CD8-positive, alpha-beta T cell (primary cell): ENCODE measurements at regions of chr14 and their contacts with region 1.

Region 1: GRCh38 chr14:101774006-101774795 is 12.7 kb downstream of the PPP2R5C start:
- DNase-seq: no peak
- ATAC-seq: no peak
- H3K4me3 ChIP-seq: no peak overlapping the region
- H3K4me3 Mint-ChIP-seq: no peak overlapping the region
- H3K27ac ChIP-seq: no peak overlapping the region
- H3K27ac Mint-ChIP-seq: peak overlapping the region; percentile 58
- H3K4me1 ChIP-seq: no peaks in the 10 kb centered on the region
- H3K4me1 Mint-ChIP-seq: peaks cover 37% of the 10 kb centered on the region
- H3K27me3 ChIP-seq: no peaks in the 10 kb centered on the region
- H3K27me3 Mint-ChIP-seq: no peaks in the 10 kb centered on the region
- CTCF ChIP-seq: no peak

Region 2: GRCh38 chr14:101797856-101798255 is 23.7 kb after region 1 on chr14:
- CTCF ChIA-PET with region 1: interaction called, 11 read pairs
- POLR2A ChIA-PET with region 1: interaction called, 3 read pairs
- intact Hi-C with region 1: no loop called
- DNase-seq: no peak
- ATAC-seq: no peak
- H3K4me3 ChIP-seq: no peak overlapping the region
- H3K4me3 Mint-ChIP-seq: no peak overlapping the region
- H3K27ac ChIP-seq: no peak overlapping the region
- H3K27ac Mint-ChIP-seq: no peak overlapping the region
- H3K4me1 ChIP-seq: peaks cover 1% of the 10 kb centered on the region
- H3K4me1 Mint-ChIP-seq: peaks cover 6% of the 10 kb centered on the region
- H3K27me3 ChIP-seq: no peaks in the 10 kb centered on the region
- H3K27me3 Mint-ChIP-seq: no peaks in the 10 kb centered on the region
- CTCF ChIP-seq: no peak

Region 3: DNA sequence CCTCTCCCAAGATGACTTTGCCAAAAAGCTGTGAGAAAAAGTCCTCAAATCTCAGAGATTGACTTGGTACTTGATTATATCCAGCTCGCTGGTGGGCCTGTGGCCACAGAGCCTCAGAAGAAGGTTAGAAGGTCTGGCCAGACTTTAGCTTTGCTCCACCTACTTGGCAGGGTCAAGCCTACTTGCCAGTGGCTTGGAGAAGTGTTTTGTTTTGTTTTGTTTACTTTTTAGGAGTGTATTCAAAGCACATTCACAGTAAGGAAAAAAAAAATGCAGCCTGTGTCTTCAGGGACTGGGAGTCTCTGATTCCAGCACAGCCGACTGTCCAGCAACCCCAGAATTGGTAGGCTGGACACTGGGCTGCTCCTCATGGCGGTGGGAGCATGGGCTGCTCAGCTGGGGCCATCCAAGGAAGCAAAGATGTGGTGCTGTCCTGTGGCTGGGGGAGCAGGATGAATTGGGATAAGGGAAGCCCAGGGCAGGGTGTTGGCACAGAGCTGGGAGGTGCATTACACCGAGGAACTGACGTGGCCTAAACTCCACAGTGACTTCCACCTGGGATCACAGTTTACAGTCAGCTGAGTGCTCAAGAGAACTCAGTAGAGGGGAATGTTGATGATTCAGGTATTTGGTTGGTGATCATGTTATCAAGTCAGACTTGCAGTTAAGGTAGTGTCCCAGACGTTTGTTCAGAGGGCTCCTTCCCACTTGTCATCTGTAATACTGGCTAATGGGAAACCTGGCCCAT is 60.8 kb after region 1 on chr14:
- CTCF ChIA-PET with region 1: interaction called, 22 read pairs
- POLR2A ChIA-PET with region 1: interaction called, 4 read pairs
- intact Hi-C with region 1: no loop called
- DNase-seq: no peak
- ATAC-seq: no peak
- H3K4me3 ChIP-seq: no peak overlapping the region
- H3K4me3 Mint-ChIP-seq: peak overlapping the region; percentile 5
- H3K27ac ChIP-seq: peak overlapping the region in 1 of 2 experiments; percentile 49
- H3K27ac Mint-ChIP-seq: peak overlapping the region; percentile 90
- H3K4me1 ChIP-seq: peaks cover 82% of the 10 kb centered on the region
- H3K4me1 Mint-ChIP-seq: peaks cover 85% of the 10 kb centered on the region
- H3K27me3 ChIP-seq: no peaks in the 10 kb centered on the region
- H3K27me3 Mint-ChIP-seq: no peaks in the 10 kb centered on the region
- CTCF ChIP-seq: no peak

Region 4: GRCh38 chr14:101843665-101844064 is 69.5 kb after region 1 on chr14:
- CTCF ChIA-PET with region 1: interaction called, 24 read pairs
- POLR2A ChIA-PET with region 1: interaction called, 9 read pairs
- intact Hi-C with region 1: loop called (anchors 1 kb)
- DNase-seq: peak in 8 of 9 experiments; percentile 24 to 89 (median 62)
- ATAC-seq: peak; percentile 70
- H3K4me3 ChIP-seq: no peak overlapping the region
- H3K4me3 Mint-ChIP-seq: peak overlapping the region; percentile 52
- H3K27ac ChIP-seq: peak overlapping the region in 1 of 2 experiments; percentile 21
- H3K27ac Mint-ChIP-seq: peak overlapping the region; percentile 90
- H3K4me1 ChIP-seq: peaks cover 67% of the 10 kb centered on the region
- H3K4me1 Mint-ChIP-seq: peaks cover 89% of the 10 kb centered on the region
- H3K27me3 ChIP-seq: no peaks in the 10 kb centered on the region
- H3K27me3 Mint-ChIP-seq: no peaks in the 10 kb centered on the region
- CTCF ChIP-seq: peak; percentile 72

Region 5: DNA sequence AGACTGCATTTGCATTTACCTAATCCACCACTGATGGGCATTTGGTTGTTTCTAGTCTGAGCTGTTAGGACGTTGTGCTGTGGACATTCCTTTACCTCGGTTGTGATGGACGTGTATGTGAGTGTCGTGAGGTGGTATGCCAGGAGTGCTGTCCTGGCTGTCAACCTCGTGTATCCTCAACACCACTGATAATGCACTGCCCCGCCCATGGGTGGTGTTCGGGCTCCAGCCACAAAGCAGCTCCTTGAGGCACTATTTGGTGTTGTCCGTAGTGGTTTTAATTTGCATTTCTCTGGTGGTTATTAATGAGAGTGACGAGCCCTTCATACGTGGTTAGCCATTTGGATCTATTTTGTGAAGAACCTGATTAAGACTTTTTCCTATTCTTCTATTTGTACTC is 74.9 kb after region 1 on chr14:
- CTCF ChIA-PET with region 1: interaction called, 24 read pairs
- POLR2A ChIA-PET with region 1: interaction called, 3 read pairs
- intact Hi-C with region 1: no loop called
- DNase-seq: peak in 1 of 9 experiments; percentile 33
- ATAC-seq: peak; percentile 26
- H3K4me3 ChIP-seq: no peak overlapping the region
- H3K4me3 Mint-ChIP-seq: no peak overlapping the region
- H3K27ac ChIP-seq: peak overlapping the region in 1 of 2 experiments; percentile 37
- H3K27ac Mint-ChIP-seq: peak overlapping the region; percentile 93
- H3K4me1 ChIP-seq: peaks cover 69% of the 10 kb centered on the region
- H3K4me1 Mint-ChIP-seq: peaks cover 90% of the 10 kb centered on the region
- H3K27me3 ChIP-seq: no peaks in the 10 kb centered on the region
- H3K27me3 Mint-ChIP-seq: no peaks in the 10 kb centered on the region
- CTCF ChIP-seq: no peak

Region 6: GRCh38 chr14:101876555-101876938 is 102.3 kb after region 1 on chr14:
- CTCF ChIA-PET with region 1: interaction called, 10 read pairs
- POLR2A ChIA-PET with region 1: no interaction called
- intact Hi-C with region 1: no loop called
- DNase-seq: peak; percentile 38 to 93 (median 65)
- ATAC-seq: peak; percentile 85
- H3K4me3 ChIP-seq: peak overlapping the region; percentile 13 to 23
- H3K4me3 Mint-ChIP-seq: peak overlapping the region; percentile 78
- H3K27ac ChIP-seq: peak overlapping the region; percentile 45 to 86
- H3K27ac Mint-ChIP-seq: peak overlapping the region; percentile 97
- H3K4me1 ChIP-seq: peaks cover 58% of the 10 kb centered on the region
- H3K4me1 Mint-ChIP-seq: peaks cover 81% of the 10 kb centered on the region
- H3K27me3 ChIP-seq: no peaks in the 10 kb centered on the region
- H3K27me3 Mint-ChIP-seq: no peaks in the 10 kb centered on the region
- CTCF ChIP-seq: no peak

Region 7: DNA sequence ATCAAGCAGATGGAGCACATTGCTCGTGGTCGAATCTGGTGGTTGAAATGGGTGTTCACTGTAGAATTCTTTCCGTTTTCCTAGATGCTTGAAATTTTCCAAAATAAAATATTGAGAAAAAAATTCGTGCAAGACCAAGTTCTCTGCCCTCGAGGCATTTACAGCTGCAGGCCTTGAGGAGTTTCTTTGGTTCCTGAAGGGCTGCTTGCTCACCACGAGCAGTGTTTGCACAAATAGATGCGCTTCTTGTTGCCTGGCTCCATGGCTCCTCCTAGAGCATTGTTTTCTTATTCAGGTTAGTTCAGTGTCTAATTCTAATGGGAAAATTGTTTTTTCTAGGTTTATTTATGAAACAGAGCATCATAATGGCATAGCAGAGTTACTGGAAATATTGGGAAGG is 115.7 kb after region 1 on chr14:
- CTCF ChIA-PET with region 1: interaction called, 11 read pairs
- POLR2A ChIA-PET with region 1: no interaction called
- intact Hi-C with region 1: loop called (anchors 5 kb)
- DNase-seq: peak in 2 of 9 experiments; percentile 24 to 37
- ATAC-seq: peak; percentile 44
- H3K4me3 ChIP-seq: no peak overlapping the region
- H3K4me3 Mint-ChIP-seq: no peak overlapping the region
- H3K27ac ChIP-seq: no peak overlapping the region
- H3K27ac Mint-ChIP-seq: peak overlapping the region; percentile 62
- H3K4me1 ChIP-seq: no peaks in the 10 kb centered on the region
- H3K4me1 Mint-ChIP-seq: no peaks in the 10 kb centered on the region
- H3K27me3 ChIP-seq: no peaks in the 10 kb centered on the region
- H3K27me3 Mint-ChIP-seq: no peaks in the 10 kb centered on the region
- CTCF ChIP-seq: no peak

Region 8: GRCh38 chr14:102421411-102422053 is 647.3 kb after region 1 on chr14:
- CTCF ChIA-PET with region 1: no interaction called
- POLR2A ChIA-PET with region 1: no interaction called
- intact Hi-C with region 1: no loop called
- DNase-seq: no peak
- ATAC-seq: no peak
- H3K4me3 ChIP-seq: no peak overlapping the region
- H3K4me3 Mint-ChIP-seq: no peak overlapping the region
- H3K27ac ChIP-seq: no peak overlapping the region
- H3K27ac Mint-ChIP-seq: no peak overlapping the region
- H3K4me1 ChIP-seq: no peaks in the 10 kb centered on the region
- H3K4me1 Mint-ChIP-seq: no peaks in the 10 kb centered on the region
- H3K27me3 ChIP-seq: no peaks in the 10 kb centered on the region
- H3K27me3 Mint-ChIP-seq: no peaks in the 10 kb centered on the region
- CTCF ChIP-seq: no peak

Region 9: GRCh38 chr14:102829016-102829548 is 1054.9 kb after region 1 on chr14:
- CTCF ChIA-PET with region 1: no interaction called
- POLR2A ChIA-PET with region 1: no interaction called
- intact Hi-C with region 1: no loop called
- DNase-seq: no peak
- ATAC-seq: no peak
- H3K4me3 ChIP-seq: no peak overlapping the region
- H3K4me3 Mint-ChIP-seq: no peak overlapping the region
- H3K27ac ChIP-seq: no peak overlapping the region
- H3K27ac Mint-ChIP-seq: peak overlapping the region; percentile 37
- H3K4me1 ChIP-seq: no peaks in the 10 kb centered on the region
- H3K4me1 Mint-ChIP-seq: peaks cover 52% of the 10 kb centered on the region
- H3K27me3 ChIP-seq: no peaks in the 10 kb centered on the region
- H3K27me3 Mint-ChIP-seq: no peaks in the 10 kb centered on the region
- CTCF ChIP-seq: no peak